ENCODE measurements at regions of chr11 and their contacts with region 1.

Region 1: GRCh38 chr11:118198370-118198769 is 21.9 kb upstream of the SCN2B start:
- DNase-seq: peak; percentile 62 to 86 (median 82)
- H3K4me3 ChIP-seq: peak overlapping the region in 29 of 59 donors; percentile 7 to 53 (median 33)
- H3K27ac ChIP-seq: no peak overlapping the region
- H3K27me3 ChIP-seq: peaks cover 0 to 4% (median 0%) of the 10 kb centered on the region in 45 donors
- CTCF ChIP-seq: peak; percentile 81 to 97 (median 91)

Region 2: DNA sequence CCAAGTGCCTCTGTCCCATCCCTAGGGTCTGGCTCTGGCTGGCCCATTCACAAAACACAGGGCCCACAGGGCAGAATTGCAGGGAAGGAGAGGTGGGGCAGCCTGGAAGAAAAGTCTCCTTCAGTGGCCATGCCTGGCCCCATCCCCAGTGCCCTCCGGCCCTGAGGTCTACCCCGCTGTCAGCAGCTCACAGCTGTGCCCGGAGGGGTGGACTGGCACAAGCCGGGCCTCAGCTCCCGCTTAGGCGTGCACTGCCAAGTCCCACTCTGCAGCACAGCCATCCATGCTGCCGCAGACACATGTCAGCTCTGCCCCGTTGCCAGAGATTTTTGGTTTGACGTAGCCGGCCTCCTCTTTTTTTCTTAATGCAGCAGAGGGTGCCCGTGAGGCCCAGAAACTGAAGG is 18.1 kb before region 1 on chr11:
- intact Hi-C with region 1: loop called in 1 of 2 experiments (anchors 2 kb)
- DNase-seq: peak; percentile 76 to 95 (median 93)
- H3K4me3 ChIP-seq: peak overlapping the region; percentile 10 to 62 (median 46)
- H3K27ac ChIP-seq: peak overlapping the region in 58 of 59 donors; percentile 20 to 96 (median 86)
- H3K27me3 ChIP-seq: no peaks in the 10 kb centered on the region
- CTCF ChIP-seq: peak in 40 of 56 donors; percentile 12 to 61 (median 30)

Region 3: GRCh38 chr11:118290923-118291322 is 92.6 kb after region 1 on chr11:
- intact Hi-C with region 1: loop called in 1 of 2 experiments (anchors 2 kb)
- DNase-seq: no peak
- H3K4me3 ChIP-seq: no peak overlapping the region
- H3K27ac ChIP-seq: no peak overlapping the region
- H3K27me3 ChIP-seq: peaks cover 0 to 6% (median 0%) of the 10 kb centered on the region in 45 donors
- CTCF ChIP-seq: peak in 48 of 56 donors; percentile 8 to 72 (median 38)

Region 4: DNA sequence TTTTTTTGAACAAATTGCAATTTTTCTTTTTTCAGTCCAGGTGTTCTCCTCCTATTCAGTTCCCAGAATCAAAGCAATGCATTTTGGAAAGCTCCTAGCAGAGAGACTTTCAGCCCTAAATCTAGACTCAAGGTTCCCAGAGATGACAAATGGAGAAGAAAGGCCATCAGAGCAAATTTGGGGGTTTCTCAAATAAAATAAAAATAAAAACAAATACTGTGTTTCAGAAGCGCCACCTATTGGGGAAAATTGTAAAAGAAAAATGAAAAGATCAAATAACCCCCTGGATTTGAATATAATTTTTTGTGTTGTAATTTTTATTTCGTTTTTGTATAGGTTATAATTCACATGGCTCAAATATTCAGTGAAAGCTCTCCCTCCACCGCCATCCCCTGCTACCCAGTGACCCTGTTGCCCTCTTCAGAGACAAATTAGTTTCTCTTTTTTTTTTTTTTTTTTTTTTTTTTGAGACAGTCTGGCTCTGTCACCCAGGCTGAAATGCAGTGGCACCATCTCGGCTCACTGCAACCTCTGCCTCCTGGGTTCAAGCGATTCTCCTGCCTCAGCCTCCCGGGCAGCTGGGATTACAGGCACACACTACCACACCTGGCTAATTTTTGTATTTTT is 154.8 kb after region 1 on chr11:
- intact Hi-C with region 1: loop called (anchors 2 to 5 kb)
- DNase-seq: no peak
- H3K4me3 ChIP-seq: no peak overlapping the region
- H3K27ac ChIP-seq: no peak overlapping the region
- H3K27me3 ChIP-seq: peaks cover 0 to 24% (median 3%) of the 10 kb centered on the region in 45 donors
- CTCF ChIP-seq: peak; percentile 51 to 85 (median 70)